ENCODE measurements at regions of chr17 and their contacts with region 1.

Region 1: DNA sequence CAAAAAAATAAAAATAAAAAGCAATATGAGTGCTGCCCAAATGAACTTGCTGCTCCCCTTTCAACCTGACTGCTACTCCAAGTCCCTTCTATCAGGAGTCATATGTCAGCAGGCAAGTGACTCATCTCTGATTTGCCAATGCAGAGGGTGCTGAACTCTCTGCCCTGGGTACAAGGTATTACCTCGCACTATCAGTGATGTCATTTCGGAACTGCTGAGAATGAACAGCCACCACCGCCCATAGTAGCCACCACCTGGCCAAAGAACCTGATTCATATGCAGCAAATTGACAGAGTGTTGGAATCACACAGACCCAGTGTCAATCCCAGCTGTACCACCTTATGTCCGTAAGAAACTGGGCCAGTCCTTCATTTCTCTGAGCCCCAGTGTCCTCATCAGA is 31.2 kb downstream of the LYRM9 start:
- DNase-seq: peak; percentile 41 to 70
- H3K4me3 ChIP-seq: no peak overlapping the region
- H3K4me3 Mint-ChIP-seq: no peak overlapping the region
- H3K27ac Mint-ChIP-seq: no peak overlapping the region
- H3K4me1 ChIP-seq: peaks cover 26% of the 10 kb centered on the region
- H3K4me1 Mint-ChIP-seq: peaks cover 21% of the 10 kb centered on the region
- H3K27me3 ChIP-seq: no peaks in the 10 kb centered on the region
- H3K27me3 Mint-ChIP-seq: no peaks in the 10 kb centered on the region
- CTCF ChIP-seq: no peak

Region 2: DNA sequence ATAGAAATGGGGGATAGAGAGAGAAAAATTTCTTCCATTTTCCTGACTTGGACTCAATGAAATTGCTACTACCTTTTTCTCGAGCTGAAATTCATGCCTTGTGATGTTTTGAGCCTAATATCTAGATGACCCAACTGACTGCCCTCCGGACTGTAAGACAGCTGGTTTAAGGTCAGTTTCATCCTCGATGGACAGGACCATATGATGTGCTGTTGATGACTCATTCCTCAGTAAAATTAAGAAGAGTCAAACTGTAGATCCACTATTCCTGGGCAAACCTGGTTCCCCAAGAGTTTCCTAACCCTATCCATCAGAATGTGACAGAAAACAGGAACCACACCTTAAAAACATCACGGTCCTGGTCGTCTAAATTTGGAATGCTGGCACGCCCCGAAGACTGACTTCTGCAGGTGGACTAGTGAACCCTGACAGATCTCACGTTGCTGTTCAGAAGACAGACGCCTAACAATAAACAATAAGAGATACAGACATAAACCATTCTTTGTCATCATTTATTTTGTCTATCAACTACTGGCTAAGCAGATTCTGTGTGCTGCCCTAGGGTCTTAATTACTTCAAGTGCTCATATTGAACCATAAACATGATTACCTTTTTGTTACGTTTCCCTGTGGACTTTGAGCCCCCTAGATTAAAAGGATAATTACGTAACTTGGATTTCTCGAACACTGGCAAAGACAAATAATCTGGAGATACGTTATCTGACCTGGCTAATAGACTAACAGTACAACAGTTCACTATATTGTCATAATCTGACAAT is 16.6 kb before region 1 on chr17:
- CTCF ChIA-PET with region 1: interaction called, 4 read pairs
- POLR2A ChIA-PET with region 1: interaction called, 8 read pairs
- intact Hi-C with region 1: loop called (anchors 2 kb)
- DNase-seq: peak; percentile 87 to 94
- H3K4me3 ChIP-seq: no peak overlapping the region
- H3K4me3 Mint-ChIP-seq: peak overlapping the region; percentile 58
- H3K27ac Mint-ChIP-seq: peak overlapping the region; percentile 93
- H3K4me1 ChIP-seq: peaks cover 28% of the 10 kb centered on the region
- H3K4me1 Mint-ChIP-seq: peaks cover 18% of the 10 kb centered on the region
- H3K27me3 ChIP-seq: no peaks in the 10 kb centered on the region
- H3K27me3 Mint-ChIP-seq: no peaks in the 10 kb centered on the region
- CTCF ChIP-seq: no peak

Region 3: DNA sequence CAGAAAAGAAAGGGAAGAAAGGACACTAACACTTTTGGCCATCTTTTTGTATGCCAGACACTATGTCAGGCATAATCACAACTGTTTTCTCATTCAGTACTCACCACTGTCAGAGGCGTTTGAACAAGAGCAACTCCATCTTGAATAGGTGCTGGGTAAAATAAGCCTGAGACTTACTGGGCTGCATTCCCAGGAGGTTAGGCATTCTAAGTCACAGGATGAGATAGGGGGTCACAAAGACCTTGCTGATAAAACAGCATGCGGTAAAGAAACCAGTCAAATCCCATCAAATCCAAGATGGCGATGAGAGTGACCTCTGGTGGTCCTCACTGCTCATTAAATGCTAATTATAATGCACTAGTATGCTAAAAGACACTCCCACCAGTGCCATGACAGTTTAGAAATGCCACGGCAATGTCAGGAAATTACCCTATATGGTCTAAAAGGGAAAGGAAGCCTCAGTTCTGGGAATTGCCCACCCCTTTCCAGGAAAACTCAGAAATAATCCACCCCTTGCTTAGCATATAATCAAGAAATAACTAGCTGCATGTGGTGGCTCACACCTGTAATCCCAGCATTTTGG is 46.1 kb after region 1 on chr17:
- CTCF ChIA-PET with region 1: no interaction called
- POLR2A ChIA-PET with region 1: no interaction called
- intact Hi-C with region 1: no loop called
- DNase-seq: peak in 1 of 2 experiments; percentile 27
- H3K4me3 ChIP-seq: no peak overlapping the region
- H3K4me3 Mint-ChIP-seq: no peak overlapping the region
- H3K27ac Mint-ChIP-seq: no peak overlapping the region
- H3K4me1 ChIP-seq: 0 out of 2 replicates have a peak, but pooled peaks cover 8% of the 10 kb centered on the region
- H3K4me1 Mint-ChIP-seq: no peaks in the 10 kb centered on the region
- H3K27me3 ChIP-seq: no peaks in the 10 kb centered on the region
- H3K27me3 Mint-ChIP-seq: no peaks in the 10 kb centered on the region
- CTCF ChIP-seq: no peak

Region 4: DNA sequence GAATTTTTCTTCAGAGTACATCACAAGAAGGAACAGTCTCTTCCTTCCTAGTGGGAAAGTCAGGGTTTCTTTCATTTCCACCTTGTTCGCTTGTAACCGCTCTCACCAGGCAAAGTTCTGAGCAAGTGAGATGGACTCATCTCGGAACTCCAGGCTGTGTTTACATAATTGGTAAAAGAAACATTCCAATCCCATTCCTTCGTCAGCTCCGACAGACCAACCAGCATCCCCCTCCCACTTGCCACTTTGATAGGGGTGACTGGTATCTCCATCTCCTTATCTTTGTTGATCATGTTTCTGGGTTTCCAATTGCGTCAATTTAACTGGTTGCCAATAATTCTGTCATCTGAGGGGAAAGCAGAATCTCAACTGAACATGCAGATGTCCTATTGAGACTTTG is 68.0 kb after region 1 on chr17:
- CTCF ChIA-PET with region 1: no interaction called
- POLR2A ChIA-PET with region 1: no interaction called
- intact Hi-C with region 1: loop called (anchors 10 kb)
- DNase-seq: peak; percentile 65 to 67
- H3K4me3 ChIP-seq: no peak overlapping the region
- H3K4me3 Mint-ChIP-seq: no peak overlapping the region
- H3K27ac Mint-ChIP-seq: peak overlapping the region; percentile 2
- H3K4me1 ChIP-seq: peaks cover 15% of the 10 kb centered on the region
- H3K4me1 Mint-ChIP-seq: peaks cover 9% of the 10 kb centered on the region
- H3K27me3 ChIP-seq: no peaks in the 10 kb centered on the region
- H3K27me3 Mint-ChIP-seq: peaks cover 3% of the 10 kb centered on the region
- CTCF ChIP-seq: no peak

Region 5: GRCh38 chr17:27956601-27957445 is 94.8 kb after region 1 on chr17:
- CTCF ChIA-PET with region 1: no interaction called
- POLR2A ChIA-PET with region 1: no interaction called
- intact Hi-C with region 1: no loop called
- DNase-seq: peak; percentile 52 to 67
- H3K4me3 ChIP-seq: no peak overlapping the region
- H3K4me3 Mint-ChIP-seq: no peak overlapping the region
- H3K27ac Mint-ChIP-seq: peak overlapping the region; percentile 20
- H3K4me1 ChIP-seq: peaks cover 42% of the 10 kb centered on the region
- H3K4me1 Mint-ChIP-seq: peaks cover 27% of the 10 kb centered on the region
- H3K27me3 ChIP-seq: no peaks in the 10 kb centered on the region
- H3K27me3 Mint-ChIP-seq: no peaks in the 10 kb centered on the region
- CTCF ChIP-seq: no peak

Measured in Caco-2 (cell line).